ENCODE measurements at regions of chr2 and their contacts with region 1.

Region 1: DNA sequence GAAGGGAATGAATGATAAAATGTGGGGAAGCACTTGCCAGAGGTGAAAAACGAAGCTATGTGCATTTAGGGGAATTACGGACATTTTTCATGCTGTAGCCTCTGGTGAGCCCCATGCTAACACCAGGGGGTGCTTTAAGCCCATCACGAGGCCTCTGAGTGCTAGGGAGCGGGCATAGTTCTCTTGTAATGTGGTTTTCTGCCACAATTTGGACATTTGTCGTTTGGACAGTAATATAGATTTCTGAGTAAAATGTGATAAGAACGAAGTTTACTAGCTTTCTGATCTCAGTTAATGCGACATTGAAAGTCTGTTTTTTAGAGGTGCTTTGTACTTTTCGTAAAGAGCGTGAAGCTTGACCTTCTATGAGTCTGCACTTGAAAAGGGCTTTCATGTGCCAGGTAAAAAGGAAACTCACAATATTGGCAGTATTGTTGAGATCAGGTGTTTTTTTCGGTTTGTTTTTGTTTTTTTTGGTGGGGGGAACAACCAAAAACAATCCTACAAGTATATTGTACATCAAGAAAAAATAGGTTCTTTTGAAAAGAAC is 50.6 kb downstream of the TRAF3IP1 start:
- DNase-seq: peak in 1 of 2 donors; percentile 84
- H3K4me3 ChIP-seq: no peak overlapping the region
- H3K27ac ChIP-seq: no peak overlapping the region
- H3K4me1 ChIP-seq: no peaks in the 10 kb centered on the region
- H3K27me3 ChIP-seq: no peaks in the 10 kb centered on the region
- CTCF ChIP-seq: peak; percentile 76 to 85 (median 84)

Region 2: DNA sequence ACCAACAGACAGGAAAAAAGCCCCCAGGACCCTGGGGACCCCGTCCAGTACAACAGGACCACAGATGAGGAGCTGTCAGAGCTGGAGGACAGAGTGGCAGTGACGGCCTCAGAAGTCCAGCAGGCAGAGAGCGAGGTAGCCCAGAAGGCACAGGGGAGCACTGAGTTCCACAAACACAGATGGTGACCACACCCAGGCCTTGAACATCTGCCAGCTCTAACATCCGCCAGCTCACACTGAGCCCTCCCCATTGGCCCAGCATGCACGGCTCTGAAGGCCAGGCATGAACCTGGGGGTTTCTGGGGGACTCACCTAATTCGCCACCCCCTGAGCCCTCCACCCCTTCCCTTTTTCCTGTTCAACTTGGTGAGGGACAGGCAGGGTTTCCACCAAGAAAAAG is 830.1 kb before region 1 on chr2:
- intact Hi-C with region 1: no loop called
- DNase-seq: no peak
- H3K4me3 ChIP-seq: no peak overlapping the region
- H3K27ac ChIP-seq: no peak overlapping the region
- H3K4me1 ChIP-seq: no peaks in the 10 kb centered on the region
- H3K27me3 ChIP-seq: no peaks in the 10 kb centered on the region
- CTCF ChIP-seq: no peak

Region 3: GRCh38 chr2:238042849-238043584 is 327.9 kb before region 1 on chr2:
- intact Hi-C with region 1: no loop called
- DNase-seq: no peak
- H3K4me3 ChIP-seq: no peak overlapping the region
- H3K27ac ChIP-seq: no peak overlapping the region
- H3K4me1 ChIP-seq: no peaks in the 10 kb centered on the region
- H3K27me3 ChIP-seq: no peaks in the 10 kb centered on the region
- CTCF ChIP-seq: no peak

Region 4: DNA sequence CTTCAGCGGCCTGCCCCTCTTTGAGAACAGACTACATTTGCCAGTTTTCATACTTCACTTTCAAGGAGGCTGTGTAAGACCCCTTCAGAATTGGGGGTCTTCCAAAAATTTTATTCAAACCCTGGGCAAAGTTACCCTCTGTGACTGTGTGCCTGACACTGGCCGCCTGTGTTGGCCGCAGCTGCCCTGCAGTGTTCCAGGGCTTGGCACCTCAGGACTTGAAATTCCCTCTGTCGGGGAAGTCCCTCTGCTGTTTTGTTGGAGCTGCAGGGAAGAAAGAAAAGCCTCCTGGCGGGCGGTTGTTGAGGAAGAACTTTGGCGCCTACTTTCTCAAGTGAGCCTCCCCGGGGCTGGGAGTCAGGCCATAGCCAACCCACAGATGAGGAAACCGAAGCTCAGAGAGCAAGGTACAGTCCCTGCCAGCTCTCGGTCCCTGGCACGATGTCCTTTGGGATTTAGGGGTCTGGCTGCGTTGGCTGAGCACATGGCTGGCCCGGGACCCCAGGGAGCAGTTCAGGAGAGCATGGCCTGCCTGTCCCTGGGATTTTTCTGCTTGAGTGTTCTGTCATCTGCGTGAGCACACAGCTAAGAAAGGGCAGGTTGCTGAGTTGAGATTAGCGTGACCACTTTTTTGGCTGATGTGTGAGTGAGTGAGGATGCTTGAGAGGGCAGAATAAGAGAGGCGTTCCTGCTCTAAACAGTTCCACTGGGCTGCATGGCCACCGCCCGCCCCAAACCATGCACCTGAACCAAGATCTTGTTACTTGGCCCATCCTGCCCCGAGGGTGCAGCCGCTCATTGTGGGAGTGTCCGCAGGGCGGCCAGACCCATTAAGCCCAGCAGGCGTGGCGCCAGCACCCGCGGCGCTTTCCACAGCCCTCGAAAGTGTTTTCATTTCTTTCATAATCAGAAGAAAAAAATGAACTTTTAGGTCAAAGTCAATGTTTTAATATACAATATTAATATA is 38.0 kb after region 1 on chr2:
- intact Hi-C with region 1: loop called (anchors 2 kb)
- DNase-seq: no peak
- H3K4me3 ChIP-seq: peak overlapping the region in 1 of 2 donors; percentile 44
- H3K27ac ChIP-seq: peak overlapping the region; percentile 50 to 70
- H3K4me1 ChIP-seq: peaks cover 0 to 13% of the 10 kb centered on the region in 2 donors
- H3K27me3 ChIP-seq: no peaks in the 10 kb centered on the region
- CTCF ChIP-seq: peak in 2 of 3 experiments; percentile 15 to 29

Region 5: DNA sequence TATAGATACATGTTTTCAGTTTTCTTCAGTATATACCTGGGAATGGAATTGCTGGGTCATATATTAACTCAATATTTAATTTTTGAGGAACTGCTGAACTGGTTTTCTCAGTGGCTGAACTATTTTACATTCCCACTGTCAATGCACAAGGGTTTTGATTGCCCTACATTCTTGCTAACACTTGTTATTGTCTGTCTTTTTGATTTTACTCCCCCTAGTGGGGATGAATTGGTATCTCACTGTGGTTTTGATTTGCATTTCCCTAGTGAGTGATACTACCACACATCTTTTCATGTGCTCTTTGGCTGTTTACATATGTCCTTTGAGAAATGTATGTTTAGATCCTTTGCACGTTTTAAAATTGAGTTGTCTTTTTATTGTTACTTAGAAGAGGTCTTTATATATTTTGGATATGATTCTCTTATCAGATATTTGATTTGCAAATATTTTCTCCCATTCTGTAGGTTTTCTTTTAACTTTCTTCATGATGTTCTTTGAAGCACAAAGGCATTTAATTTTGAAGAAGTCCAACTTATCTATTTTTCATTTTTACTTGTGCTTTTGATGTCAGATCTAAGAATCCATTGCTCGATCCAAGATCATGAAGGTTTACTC is 92.0 kb after region 1 on chr2:
- intact Hi-C with region 1: loop called (anchors 1 kb)
- DNase-seq: no peak
- H3K4me3 ChIP-seq: no peak overlapping the region
- H3K27ac ChIP-seq: no peak overlapping the region
- H3K4me1 ChIP-seq: peaks cover 6 to 7% of the 10 kb centered on the region in 2 donors
- H3K27me3 ChIP-seq: no peaks in the 10 kb centered on the region
- CTCF ChIP-seq: peak; percentile 67 to 77 (median 73)

Region 6: GRCh38 chr2:238754259-238754658 is 383.4 kb after region 1 on chr2:
- intact Hi-C with region 1: no loop called
- DNase-seq: no peak
- H3K4me3 ChIP-seq: no peak overlapping the region
- H3K27ac ChIP-seq: no peak overlapping the region
- H3K4me1 ChIP-seq: no peaks in the 10 kb centered on the region
- H3K27me3 ChIP-seq: no peaks in the 10 kb centered on the region
- CTCF ChIP-seq: no peak

Region 7: DNA sequence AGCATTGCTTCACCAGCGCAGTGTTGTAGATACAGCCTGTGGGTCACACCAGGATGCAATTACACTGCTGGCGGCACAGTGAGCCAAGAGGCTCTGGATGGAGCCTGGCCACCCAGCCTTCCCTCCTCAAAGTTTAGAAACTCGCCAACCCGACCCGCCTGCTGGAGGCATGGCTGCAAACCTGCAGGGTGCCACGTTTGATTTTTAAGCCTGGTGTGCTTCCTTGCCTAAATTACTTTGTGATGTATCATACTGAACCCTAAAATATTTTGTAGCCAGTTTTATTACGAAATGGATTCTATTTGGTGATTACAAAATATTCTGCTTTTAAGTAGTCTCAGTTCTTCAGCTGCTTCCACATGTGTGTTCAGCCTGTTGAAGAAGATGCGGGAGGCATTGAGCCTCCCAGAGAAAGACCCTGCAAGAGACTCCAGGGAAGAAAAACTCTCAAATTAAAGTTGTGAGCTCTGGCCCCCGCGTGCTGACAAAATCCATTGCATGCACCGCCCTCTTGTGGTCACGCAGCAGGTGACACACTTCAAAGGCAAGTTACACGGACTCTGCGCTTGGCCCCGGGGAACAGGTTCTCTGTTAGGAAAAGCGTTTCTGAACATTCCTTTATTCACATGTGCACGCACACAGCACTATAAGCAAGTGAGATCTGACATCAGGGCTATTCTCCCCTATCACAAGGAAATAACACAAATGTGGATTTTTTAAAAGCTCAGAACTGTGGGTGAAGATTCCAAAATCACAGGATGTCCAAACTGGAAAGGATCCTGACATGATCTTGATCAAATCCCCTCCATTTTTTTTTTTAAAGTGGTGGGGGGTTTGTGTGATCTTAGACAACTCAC is 414.0 kb after region 1 on chr2:
- intact Hi-C with region 1: loop called (anchors 2 kb)
- DNase-seq: peak in 1 of 2 donors; percentile 81
- H3K4me3 ChIP-seq: peak overlapping the region in 1 of 2 donors; percentile 38
- H3K27ac ChIP-seq: peak overlapping the region; percentile 1 to 62
- H3K4me1 ChIP-seq: no peaks in the 10 kb centered on the region
- H3K27me3 ChIP-seq: no peaks in the 10 kb centered on the region
- CTCF ChIP-seq: peak; percentile 82 to 89 (median 82)

Region 8: GRCh38 chr2:238821391-238821790 is 450.5 kb after region 1 on chr2:
- intact Hi-C with region 1: no loop called
- DNase-seq: no peak
- H3K4me3 ChIP-seq: no peak overlapping the region
- H3K27ac ChIP-seq: no peak overlapping the region
- H3K4me1 ChIP-seq: no peaks in the 10 kb centered on the region
- H3K27me3 ChIP-seq: no peaks in the 10 kb centered on the region
- CTCF ChIP-seq: no peak

Region 9: DNA sequence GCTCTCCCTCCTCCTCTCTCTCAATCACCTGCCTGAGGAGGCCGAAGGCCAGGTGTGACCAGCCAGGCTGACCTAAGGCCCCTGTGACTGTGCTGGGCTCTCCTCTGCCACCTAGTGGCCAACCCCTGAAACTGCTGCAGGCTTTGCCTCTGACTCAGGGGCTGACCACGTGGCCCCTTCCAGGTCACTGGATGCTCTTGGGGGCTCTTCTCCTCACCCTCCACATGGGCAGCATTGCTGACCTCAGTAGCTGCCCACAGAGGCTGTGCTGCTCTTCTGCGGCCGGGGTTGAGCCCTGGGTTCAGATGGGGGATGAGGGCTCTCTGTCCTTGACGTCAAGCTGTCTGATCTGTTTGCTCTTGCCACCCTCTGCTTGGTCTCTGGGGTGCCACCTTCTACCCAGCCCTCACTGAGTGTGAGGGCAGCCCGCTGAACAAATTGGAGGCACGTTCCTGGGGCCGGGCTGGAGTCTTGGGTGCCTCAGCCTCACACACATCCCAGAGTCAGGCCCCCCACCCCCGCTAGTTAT is 599.7 kb after region 1 on chr2:
- intact Hi-C with region 1: loop called (anchors 5 kb)
- DNase-seq: peak in 1 of 2 donors; percentile 78
- H3K4me3 ChIP-seq: no peak overlapping the region
- H3K27ac ChIP-seq: no peak overlapping the region
- H3K4me1 ChIP-seq: no peaks in the 10 kb centered on the region
- H3K27me3 ChIP-seq: no peaks in the 10 kb centered on the region
- CTCF ChIP-seq: peak; percentile 88 to 99 (median 99)